Activated CD8-positive, alpha-beta T cell treated with anti-CD3 and anti-CD28 coated beads, Interleukin-2, amount 10 ng/mL, durations not matched to agents 7 days and 5 days (primary cell): ENCODE measurements at regions of chr15 and their contacts with region 1.

Region 1: DNA sequence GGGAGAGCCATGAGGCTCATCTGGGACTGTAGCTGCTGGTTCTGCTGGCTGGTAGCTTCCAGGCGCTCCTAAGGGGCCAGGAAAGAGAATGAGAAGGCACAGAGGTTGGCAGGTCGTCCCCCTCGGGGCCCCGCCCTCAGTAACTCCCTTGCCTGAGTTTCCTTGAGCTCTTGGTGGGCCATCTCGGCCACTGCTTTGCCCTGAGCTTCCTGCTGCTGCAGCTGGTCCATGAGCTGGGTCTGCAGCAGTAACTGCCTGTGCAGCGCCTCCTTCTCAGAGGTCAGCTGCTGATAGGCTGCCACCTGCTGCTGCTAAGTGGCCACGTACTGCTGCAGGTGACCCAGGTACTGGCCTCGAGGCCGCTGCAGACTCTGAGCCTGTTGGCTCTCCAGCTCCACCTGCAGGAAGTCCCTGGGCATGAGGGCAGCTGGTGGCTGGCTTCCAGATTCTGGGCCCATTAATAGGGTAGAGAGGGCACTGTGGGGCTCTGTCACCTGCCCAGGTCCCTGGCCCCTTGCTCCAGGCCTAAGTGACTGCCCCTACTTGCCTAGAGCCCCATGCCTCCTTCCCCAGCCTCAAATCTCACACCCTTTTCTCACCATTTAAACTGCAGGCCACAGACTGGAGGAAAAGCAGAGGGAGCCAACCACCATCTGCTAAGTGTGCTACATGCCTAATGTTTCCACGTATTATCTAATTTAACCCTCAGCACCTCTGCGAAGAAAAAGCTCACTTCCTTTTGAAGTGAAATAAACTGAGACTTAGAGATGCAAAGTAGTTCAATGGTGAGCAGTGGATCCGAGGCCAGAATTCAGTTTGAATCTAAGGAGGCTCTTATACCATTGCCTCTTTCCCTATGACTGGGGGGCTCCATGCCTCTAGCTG is 10.8 kb upstream of the VPS33B start:
- DNase-seq: peak; percentile 75
- ATAC-seq: peak; percentile 87
- H3K4me3 Mint-ChIP-seq: no peak overlapping the region
- H3K27ac Mint-ChIP-seq: no peak overlapping the region
- H3K4me1 Mint-ChIP-seq: peaks cover 4% of the 10 kb centered on the region
- H3K27me3 Mint-ChIP-seq: peaks cover 12% of the 10 kb centered on the region

Region 2: DNA sequence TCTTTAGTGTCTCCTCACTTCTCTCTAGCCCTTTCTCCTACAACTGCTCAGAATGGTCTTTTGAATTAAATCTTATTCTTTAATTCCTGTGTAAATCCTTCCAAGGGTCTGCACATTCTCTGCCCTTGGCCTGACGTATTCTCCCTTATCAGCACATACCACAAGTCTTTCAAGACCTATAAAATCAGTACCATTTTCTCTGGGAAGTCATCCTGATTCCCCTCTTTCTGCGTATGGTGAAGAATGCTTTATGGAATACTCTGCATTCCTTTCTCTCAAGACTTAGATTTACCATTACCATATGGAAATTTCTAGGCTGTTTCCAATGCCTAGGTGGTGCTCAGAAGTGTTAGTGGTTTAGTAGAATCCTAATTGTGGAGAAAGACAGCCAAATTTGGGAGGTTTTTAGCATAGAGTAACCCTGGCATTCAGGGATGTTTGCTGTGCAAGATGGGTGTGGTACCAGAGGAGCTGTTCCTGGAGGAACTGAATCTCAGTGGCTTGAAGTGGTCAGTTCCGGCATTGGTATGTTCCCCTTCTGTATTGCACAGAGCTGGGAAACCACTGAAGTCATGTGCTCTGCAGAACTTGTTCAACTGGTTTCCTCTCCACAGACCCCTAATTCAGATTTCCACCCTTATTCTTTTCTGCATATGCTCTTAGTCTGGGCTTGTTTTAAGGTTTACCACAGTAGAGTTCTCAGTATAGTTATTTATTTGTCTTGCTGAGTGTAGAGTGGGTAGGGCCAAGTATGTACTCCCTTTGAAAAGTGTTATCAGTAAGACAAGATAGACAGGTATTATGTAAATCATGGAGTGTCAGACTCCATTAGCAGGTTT is 620.6 kb before region 1 on chr15:
- CTCF ChIA-PET with region 1: no interaction called
- POLR2A ChIA-PET with region 1: no interaction called
- DNase-seq: peak; percentile 54
- ATAC-seq: peak; percentile 57
- H3K4me3 Mint-ChIP-seq: peak overlapping the region; percentile 37
- H3K27ac Mint-ChIP-seq: peak overlapping the region; percentile 74
- H3K4me1 Mint-ChIP-seq: peaks cover 78% of the 10 kb centered on the region
- H3K27me3 Mint-ChIP-seq: no peaks in the 10 kb centered on the region

Region 3: DNA sequence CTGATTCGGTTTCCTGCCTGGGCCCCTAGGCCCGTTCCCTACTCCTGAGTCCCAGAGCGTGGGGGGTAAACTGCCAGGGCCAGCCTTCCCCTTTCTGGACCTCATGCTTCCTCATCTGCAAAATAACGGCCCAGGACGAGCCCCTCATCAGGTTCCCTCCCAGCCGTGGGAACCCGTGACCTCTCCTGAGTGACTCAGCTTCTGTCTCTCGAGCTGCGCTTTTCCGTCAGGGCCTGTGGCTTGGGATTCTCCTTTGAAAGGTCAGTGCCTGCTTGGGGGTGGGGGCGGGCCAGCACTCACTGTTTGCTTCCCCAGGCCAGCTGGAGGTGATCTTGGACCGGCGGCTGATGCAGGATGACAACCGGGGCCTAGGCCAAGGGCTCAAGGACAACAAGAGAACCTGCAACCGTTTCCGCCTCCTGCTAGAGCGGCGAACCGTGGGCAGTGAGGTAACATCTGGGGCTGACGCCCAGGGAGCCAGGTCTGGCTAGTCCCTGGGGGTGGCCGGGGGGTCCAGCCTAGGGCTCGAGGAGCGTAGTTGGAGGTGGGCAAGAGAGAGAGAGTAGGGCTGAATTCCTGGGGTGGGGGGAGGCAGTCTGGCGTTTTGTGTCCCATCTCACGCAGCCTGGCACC is 117.2 kb before region 1 on chr15:
- CTCF ChIA-PET with region 1: no interaction called
- POLR2A ChIA-PET with region 1: no interaction called
- DNase-seq: no peak
- ATAC-seq: no peak
- H3K4me3 Mint-ChIP-seq: no peak overlapping the region
- H3K27ac Mint-ChIP-seq: no peak overlapping the region
- H3K4me1 Mint-ChIP-seq: no peaks in the 10 kb centered on the region
- H3K27me3 Mint-ChIP-seq: no peaks in the 10 kb centered on the region

Region 4: DNA sequence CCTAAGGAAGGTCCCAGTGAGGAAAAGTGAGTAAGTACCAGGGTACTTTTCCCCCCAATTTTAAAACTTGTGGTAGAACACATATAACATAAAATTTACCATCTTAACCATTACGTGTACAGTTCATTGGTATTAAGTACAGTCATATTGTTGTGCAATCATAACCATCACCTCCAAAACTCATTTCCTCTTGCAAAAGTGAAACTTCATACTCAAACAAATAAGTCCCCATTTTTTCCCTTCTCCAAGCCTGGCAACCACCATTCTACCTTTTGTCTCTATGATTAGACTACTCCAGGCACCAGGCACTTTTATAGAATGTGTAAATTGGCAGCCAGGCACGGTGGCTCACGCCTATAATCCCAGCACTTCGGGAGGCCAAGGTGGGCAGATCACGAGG is 51.0 kb before region 1 on chr15:
- CTCF ChIA-PET with region 1: interaction called, 12 read pairs
- POLR2A ChIA-PET with region 1: interaction called, 3 read pairs
- DNase-seq: no peak
- ATAC-seq: no peak
- H3K4me3 Mint-ChIP-seq: no peak overlapping the region
- H3K27ac Mint-ChIP-seq: peak overlapping the region; percentile 72
- H3K4me1 Mint-ChIP-seq: peaks cover 24% of the 10 kb centered on the region
- H3K27me3 Mint-ChIP-seq: no peaks in the 10 kb centered on the region

Region 5: GRCh38 chr15:91022075-91022835 is 10.9 kb before region 1 on chr15 and contains the start of gene VPS33B:
- CTCF ChIA-PET with region 1: interaction called, 37 read pairs
- POLR2A ChIA-PET with region 1: interaction called, 4 read pairs
- DNase-seq: peak; percentile 84
- ATAC-seq: peak; percentile 89
- H3K4me3 Mint-ChIP-seq: peak within 1 kb of the TSS; percentile 90
- H3K27ac Mint-ChIP-seq: peak within 1 kb of the TSS; percentile 87
- H3K4me1 Mint-ChIP-seq: peaks cover 43% of the 10 kb centered on the region
- H3K27me3 Mint-ChIP-seq: no peaks in the 10 kb centered on the region
- total RNA-seq, gene VPS33B: 16.6 to 21.2 TPM

Region 6: DNA sequence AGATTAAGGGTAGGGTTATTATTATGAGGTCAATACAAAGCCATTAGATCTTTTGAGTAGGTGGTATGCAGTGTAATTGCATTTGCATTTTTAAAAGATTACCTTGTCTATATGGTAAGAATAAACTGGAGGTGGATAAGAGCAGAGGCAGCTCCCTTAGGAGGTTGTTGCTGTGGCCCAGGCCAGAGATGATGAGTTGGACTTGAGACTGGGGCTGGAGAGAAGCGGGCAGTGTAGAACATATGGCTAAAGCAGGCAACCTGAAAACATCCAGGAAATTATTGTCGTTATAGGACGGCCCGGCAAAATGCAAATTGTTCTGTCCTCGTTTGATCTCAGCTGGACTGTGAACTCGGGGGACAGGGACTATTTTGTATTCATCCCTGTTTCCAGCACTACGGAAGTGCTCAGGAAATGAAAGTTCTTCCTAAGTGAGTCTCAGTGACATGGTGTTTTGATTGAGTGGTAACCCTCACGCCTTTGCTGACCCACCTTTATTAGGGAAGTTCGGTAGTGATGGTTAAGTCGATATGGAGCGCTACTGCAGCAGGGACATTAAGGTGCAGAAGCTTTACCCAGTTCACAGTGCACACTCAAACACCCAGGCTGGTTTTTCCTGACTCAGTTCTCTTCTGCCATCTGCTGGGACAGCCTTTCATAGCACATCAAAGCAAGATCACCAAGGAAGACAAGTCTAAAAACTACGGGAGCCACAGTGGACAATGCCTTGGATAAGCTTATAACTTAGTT is 16.4 kb after region 1 on chr15:
- CTCF ChIA-PET with region 1: interaction called, 20 read pairs
- POLR2A ChIA-PET with region 1: no interaction called
- DNase-seq: peak; percentile 79
- ATAC-seq: peak; percentile 90
- H3K4me3 Mint-ChIP-seq: no peak overlapping the region
- H3K27ac Mint-ChIP-seq: no peak overlapping the region
- H3K4me1 Mint-ChIP-seq: peaks cover 27% of the 10 kb centered on the region
- H3K27me3 Mint-ChIP-seq: peaks cover 35% of the 10 kb centered on the region